K562 (cell line): ENCODE measurements at regions of chr17 and their contacts with region 1.

Region 1: GRCh38 chr17:76868176-76868668 is at the start of gene MGAT5B:
- DNase-seq: peak; percentile 88 to 94 (median 93)
- ATAC-seq: peak; percentile 99
- H3K4me3 ChIP-seq: peak within 1 kb of the TSS; percentile 23
- H3K27ac ChIP-seq: no peak within 1 kb of the TSS
- H3K4me1 ChIP-seq: peaks cover 6 to 45% of the 10 kb centered on the region in 2 experiments; a peak in 3 of 5 replicates
- H3K27me3 ChIP-seq: peaks cover 0 to 19% of the 10 kb centered on the region in 2 experiments; a peak in 2 of 5 replicates
- CTCF ChIP-seq: peak; percentile 66 to 94 (median 86)
- EP300 ChIP-seq: no peak
- POLR2A ChIP-seq: no peak
- RAD21 ChIP-seq: peak; percentile 86 to 94
- polyA plus RNA-seq, gene MGAT5B: not detected

Region 2: DNA sequence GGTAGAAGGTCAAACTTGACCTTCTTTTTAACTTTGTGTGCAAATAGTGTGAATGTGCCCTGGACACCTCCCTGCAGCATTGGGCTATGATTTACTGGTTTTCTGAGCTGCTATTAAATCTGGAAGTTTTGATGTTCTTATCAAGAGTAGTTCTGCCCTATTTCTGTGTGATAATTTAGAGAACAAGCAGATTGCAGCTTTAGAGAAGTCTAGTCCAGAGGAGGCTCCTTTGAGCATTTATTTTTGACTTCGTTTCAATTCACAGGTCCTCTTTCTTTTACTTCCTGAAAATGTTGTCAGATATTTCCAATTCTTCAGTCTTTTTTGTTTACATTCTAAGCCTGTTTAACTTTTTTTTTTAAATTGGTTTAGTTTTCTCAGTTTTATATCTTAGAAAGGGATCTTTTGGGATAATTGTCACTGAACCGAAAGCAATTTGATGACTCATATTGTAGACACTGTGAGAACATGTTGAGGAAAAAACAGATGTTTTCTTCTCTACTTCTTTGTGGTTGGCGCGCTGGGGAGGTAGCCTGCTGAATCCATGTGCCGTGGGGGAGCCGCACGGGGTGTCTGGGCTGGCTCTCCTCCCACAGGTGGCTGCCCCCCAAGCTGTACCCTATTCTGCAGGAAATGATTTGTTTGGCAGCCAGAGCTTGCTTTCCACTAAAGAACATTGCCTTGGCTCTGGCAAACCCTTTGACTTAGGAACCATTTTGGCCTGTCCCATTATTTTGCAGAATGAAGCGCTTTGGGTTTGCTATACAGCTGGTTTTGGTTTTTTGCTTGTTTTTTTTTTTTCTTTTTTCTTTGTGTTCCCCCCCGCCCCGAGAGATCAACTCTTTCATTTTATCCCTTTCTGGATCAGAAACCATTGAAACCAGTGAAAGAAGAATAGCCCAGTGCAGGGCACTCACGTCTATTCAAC is 76.9 kb before region 1 on chr17:
- CTCF ChIA-PET with region 1: no interaction called
- POLR2A ChIA-PET with region 1: no interaction called
- in situ Hi-C with region 1: no loop called
- intact Hi-C with region 1: loop called (anchors 5 kb)
- DNase-seq: peak; percentile 57 to 81 (median 74)
- ATAC-seq: peak; percentile 76
- H3K4me3 ChIP-seq: no peak overlapping the region
- H3K27ac ChIP-seq: peak overlapping the region; percentile 40; the same call in 1 of the 3 replicates
- H3K4me1 ChIP-seq: peaks cover 18 to 31% of the 10 kb centered on the region in 2 experiments
- H3K27me3 ChIP-seq: no peaks in the 10 kb centered on the region
- CTCF ChIP-seq: no peak
- EP300 ChIP-seq: peak; percentile 3; the same call in 1 of the 2 replicates
- POLR2A ChIP-seq: no peak
- RAD21 ChIP-seq: no peak

Region 3: DNA sequence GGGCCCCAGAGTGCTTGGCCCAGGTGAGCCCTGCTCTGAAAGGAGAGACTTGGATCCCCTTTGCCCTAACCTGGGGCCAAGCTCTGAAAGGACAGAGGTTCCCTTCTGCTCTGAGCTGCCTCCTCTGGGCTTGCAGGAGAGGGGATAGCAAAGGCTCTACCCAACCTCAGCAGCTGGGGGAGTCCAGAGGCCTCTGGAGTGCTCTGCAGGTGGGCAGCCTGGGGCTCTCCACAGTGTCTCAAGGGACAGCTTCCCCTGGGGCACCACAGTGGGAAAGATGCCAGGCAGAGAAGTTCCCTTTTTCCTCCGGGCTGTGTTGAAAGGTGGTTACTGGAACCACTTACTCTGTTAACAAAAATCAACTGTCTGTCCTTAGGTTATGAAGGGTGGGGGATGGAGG is 48.2 kb before region 1 on chr17:
- CTCF ChIA-PET with region 1: no interaction called
- POLR2A ChIA-PET with region 1: no interaction called
- in situ Hi-C with region 1: no loop called
- intact Hi-C with region 1: no loop called
- DNase-seq: no peak
- ATAC-seq: no peak
- H3K4me3 ChIP-seq: no peak overlapping the region
- H3K27ac ChIP-seq: no peak overlapping the region
- H3K4me1 ChIP-seq: peaks cover 0 to 4% of the 10 kb centered on the region in 2 experiments; a peak in 1 of 5 replicates
- H3K27me3 ChIP-seq: peaks cover 7 to 48% of the 10 kb centered on the region in 2 experiments; a peak in 4 of 5 replicates
- CTCF ChIP-seq: no peak
- EP300 ChIP-seq: no peak
- POLR2A ChIP-seq: no peak
- RAD21 ChIP-seq: no peak

Region 4: DNA sequence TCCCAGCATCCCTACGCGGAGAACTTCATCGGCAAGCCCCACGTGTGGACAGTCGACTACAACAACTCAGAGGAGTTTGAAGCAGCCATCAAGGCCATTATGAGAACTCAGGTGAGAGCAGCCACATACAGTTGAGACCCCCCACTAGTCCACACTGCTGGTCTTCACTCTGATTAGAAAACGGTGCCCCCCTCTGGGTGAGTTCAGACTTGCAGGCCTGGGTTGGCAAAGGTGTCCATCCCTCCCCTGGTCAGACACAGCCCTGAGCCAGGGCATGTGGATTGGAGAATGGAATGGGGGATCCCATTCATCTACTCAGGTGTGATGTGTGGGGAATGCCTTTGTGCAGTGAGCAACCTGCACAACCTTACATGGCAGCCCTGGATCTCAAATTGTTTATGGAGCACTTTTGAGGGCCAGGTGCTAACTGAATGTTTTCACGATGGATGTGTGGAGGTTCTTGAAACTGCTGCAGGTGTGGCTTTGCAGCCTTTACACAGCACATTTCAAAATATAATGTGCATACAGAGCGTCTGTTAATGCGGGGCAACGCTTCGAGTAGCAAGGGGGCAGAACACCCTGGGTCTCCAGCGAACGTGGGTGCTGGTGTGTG is 72.6 kb after region 1 on chr17:
- CTCF ChIA-PET with region 1: no interaction called
- POLR2A ChIA-PET with region 1: interaction called, 3 read pairs
- in situ Hi-C with region 1: no loop called
- intact Hi-C with region 1: loop called (anchors 10 kb)
- DNase-seq: peak in 1 of 4 experiments; percentile 34
- ATAC-seq: peak; percentile 41; the same call in 1 of the 3 replicates
- H3K4me3 ChIP-seq: no peak overlapping the region
- H3K27ac ChIP-seq: no peak overlapping the region
- H3K4me1 ChIP-seq: peaks cover 0 to 3% of the 10 kb centered on the region in 2 experiments; a peak in 1 of 5 replicates
- H3K27me3 ChIP-seq: peaks cover 18 to 60% of the 10 kb centered on the region in 2 experiments; a peak in 4 of 5 replicates
- CTCF ChIP-seq: peak; percentile 21 to 38 (median 35); a peak in 3 of 6 replicates
- EP300 ChIP-seq: no peak
- POLR2A ChIP-seq: no peak
- RAD21 ChIP-seq: peak in 1 of 2 experiments; percentile 13; a peak in 1 of 4 replicates

Region 5: GRCh38 chr17:77068915-77069314 is 200.7 kb after region 1 on chr17:
- CTCF ChIA-PET with region 1: no interaction called
- POLR2A ChIA-PET with region 1: no interaction called
- in situ Hi-C with region 1: no loop called
- intact Hi-C with region 1: loop called (anchors 5 kb)
- DNase-seq: no peak
- ATAC-seq: no peak
- H3K4me3 ChIP-seq: no peak overlapping the region
- H3K27ac ChIP-seq: no peak overlapping the region; the same call in 2 of the 3 replicates
- H3K4me1 ChIP-seq: peaks cover 23 to 24% of the 10 kb centered on the region in 2 experiments; a peak in 4 of 5 replicates
- H3K27me3 ChIP-seq: no peaks in the 10 kb centered on the region
- CTCF ChIP-seq: no peak
- EP300 ChIP-seq: no peak
- POLR2A ChIP-seq: no peak
- RAD21 ChIP-seq: no peak

Region 6: DNA sequence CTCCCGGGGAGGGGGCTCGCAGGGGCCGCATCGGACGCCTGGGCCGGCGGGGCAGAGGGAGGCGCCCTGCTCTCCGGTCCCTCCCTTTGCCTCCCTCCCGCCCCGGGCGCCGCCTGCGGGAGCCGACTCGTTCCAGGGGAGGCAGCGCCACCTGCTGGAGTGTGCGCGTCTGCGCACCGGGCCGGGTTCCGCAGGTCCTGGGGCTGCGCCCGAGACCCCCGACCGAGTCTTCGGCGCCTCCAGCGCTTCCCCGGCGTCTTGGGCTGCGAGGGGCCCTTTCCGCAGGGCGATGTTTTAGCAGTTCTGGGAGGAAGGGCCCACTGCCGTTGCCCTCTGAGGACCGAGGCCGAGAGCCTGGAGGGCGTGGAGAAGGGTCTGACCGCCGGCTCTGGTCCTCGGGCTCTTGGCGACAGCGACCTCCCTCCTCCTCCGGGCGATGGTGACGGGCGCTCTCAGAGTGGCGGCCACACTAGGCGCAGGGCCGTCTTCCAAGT is 378.9 kb after region 1 on chr17:
- CTCF ChIA-PET with region 1: interaction called, 10 read pairs
- POLR2A ChIA-PET with region 1: no interaction called
- in situ Hi-C with region 1: no loop called
- intact Hi-C with region 1: no loop called
- DNase-seq: peak; percentile 88 to 93 (median 91)
- ATAC-seq: peak; percentile 98
- H3K4me3 ChIP-seq: peak overlapping the region; percentile 41
- H3K27ac ChIP-seq: no peak overlapping the region
- H3K4me1 ChIP-seq: peaks cover 0 to 19% of the 10 kb centered on the region in 2 experiments; a peak in 2 of 5 replicates
- H3K27me3 ChIP-seq: peaks cover 12 to 25% of the 10 kb centered on the region in 2 experiments; a peak in 4 of 5 replicates
- CTCF ChIP-seq: peak; percentile 79 to 92 (median 86)
- EP300 ChIP-seq: no peak
- POLR2A ChIP-seq: no peak
- RAD21 ChIP-seq: peak; percentile 95 to 97